ENCODE measurements at regions of chr13 and their contacts with region 1.

Region 1: GRCh38 chr13:31538067-31539042 is 201.0 kb upstream of the RXFP2 start:
- DNase-seq: peak; percentile 72
- H3K4me3 Mint-ChIP-seq: no peak overlapping the region
- H3K27ac Mint-ChIP-seq: no peak overlapping the region
- H3K4me1 Mint-ChIP-seq: no peaks in the 10 kb centered on the region
- H3K27me3 Mint-ChIP-seq: peaks cover 40% of the 10 kb centered on the region
- CTCF ChIP-seq: peak; percentile 51

Region 2: DNA sequence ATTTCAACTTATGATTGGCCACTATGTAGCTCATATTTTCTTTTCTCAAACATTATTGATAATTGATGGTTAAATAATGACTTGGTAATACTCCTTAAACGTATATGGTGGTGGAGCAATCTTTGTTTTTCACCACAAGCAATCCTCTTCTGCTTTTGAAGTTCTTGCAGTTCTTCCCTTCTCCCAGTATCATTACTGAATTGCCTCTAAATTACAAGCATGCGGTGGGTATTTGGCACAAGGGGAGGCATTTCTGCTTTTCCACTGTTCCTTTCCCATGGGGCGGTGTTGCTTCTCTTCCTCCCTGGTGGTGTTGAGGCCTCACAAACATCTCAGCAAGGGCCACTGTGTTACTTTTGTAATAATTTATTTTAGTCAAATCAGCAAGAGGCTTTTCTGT is 33.4 kb before region 1 on chr13:
- CTCF ChIA-PET with region 1: interaction called, 10 read pairs
- POLR2A ChIA-PET with region 1: no interaction called
- intact Hi-C with region 1: no loop called
- DNase-seq: no peak
- H3K4me3 Mint-ChIP-seq: no peak overlapping the region
- H3K27ac Mint-ChIP-seq: no peak overlapping the region
- H3K4me1 Mint-ChIP-seq: no peaks in the 10 kb centered on the region
- H3K27me3 Mint-ChIP-seq: peaks cover 33% of the 10 kb centered on the region
- CTCF ChIP-seq: no peak

Region 3: GRCh38 chr13:31518645-31519044 is 19.7 kb before region 1 on chr13:
- CTCF ChIA-PET with region 1: interaction called, 24 read pairs
- POLR2A ChIA-PET with region 1: interaction called, 3 read pairs
- intact Hi-C with region 1: no loop called
- DNase-seq: no peak
- H3K4me3 Mint-ChIP-seq: no peak overlapping the region
- H3K27ac Mint-ChIP-seq: no peak overlapping the region
- H3K4me1 Mint-ChIP-seq: no peaks in the 10 kb centered on the region
- H3K27me3 Mint-ChIP-seq: peaks cover 63% of the 10 kb centered on the region
- CTCF ChIP-seq: no peak

Region 4: DNA sequence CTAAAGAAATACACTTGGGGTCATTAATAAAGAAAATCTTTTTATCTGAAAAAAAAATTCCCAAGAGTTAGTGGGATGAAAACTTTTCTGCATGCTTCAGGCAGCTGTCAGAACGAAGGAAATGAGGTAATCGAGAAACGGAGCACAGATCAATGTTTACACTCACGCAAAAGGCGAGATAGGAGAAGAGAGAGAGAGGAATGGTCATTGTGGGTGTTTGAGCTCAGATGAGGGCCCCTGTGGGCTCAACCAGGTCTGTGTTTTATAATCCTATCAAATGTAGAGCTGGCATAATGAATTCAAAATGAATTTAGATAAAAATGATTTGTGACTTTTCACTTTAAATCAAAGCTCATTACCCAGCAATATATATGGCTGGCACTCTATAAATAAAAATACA is 194.7 kb after region 1 on chr13:
- CTCF ChIA-PET with region 1: interaction called, 12 read pairs
- POLR2A ChIA-PET with region 1: no interaction called
- intact Hi-C with region 1: no loop called
- DNase-seq: no peak
- H3K4me3 Mint-ChIP-seq: no peak overlapping the region
- H3K27ac Mint-ChIP-seq: no peak overlapping the region
- H3K4me1 Mint-ChIP-seq: no peaks in the 10 kb centered on the region
- H3K27me3 Mint-ChIP-seq: peaks cover 54% of the 10 kb centered on the region
- CTCF ChIP-seq: no peak

Region 5: GRCh38 chr13:31742097-31742734 is 203.9 kb after region 1 on chr13:
- CTCF ChIA-PET with region 1: interaction called, 72 read pairs
- POLR2A ChIA-PET with region 1: interaction called, 3 read pairs
- intact Hi-C with region 1: loop called (anchors 1 kb)
- DNase-seq: peak; percentile 73
- H3K4me3 Mint-ChIP-seq: no peak overlapping the region
- H3K27ac Mint-ChIP-seq: no peak overlapping the region
- H3K4me1 Mint-ChIP-seq: peaks cover 5% of the 10 kb centered on the region
- H3K27me3 Mint-ChIP-seq: peaks cover 16% of the 10 kb centered on the region
- CTCF ChIP-seq: peak; percentile 90

Region 6: DNA sequence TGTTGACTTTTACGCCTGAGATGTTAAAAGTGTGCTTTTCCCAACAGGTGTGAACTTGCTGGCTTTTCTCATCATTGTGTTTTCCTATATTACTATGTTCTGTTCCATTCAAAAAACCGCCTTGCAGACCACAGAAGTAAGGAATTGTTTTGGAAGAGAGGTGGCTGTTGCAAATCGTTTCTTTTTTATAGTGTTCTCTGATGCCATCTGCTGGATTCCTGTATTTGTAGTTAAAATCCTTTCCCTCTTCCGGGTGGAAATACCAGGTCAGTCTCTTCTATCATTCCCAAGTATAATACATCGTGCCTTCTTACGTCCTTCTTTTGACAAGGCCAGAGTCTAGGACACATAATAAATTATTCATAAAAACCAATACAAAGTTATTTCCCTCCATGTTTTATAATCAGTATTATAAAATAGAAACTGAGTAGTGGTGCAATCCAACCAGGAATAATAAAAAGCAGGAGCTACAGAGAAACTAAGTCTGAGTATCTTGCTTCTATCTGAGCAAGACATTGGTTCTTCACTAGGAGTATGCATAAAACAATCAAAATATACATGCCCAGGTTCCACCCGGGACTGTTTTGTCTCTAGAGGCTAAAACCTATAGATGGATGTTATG is 258.9 kb after region 1 on chr13:
- CTCF ChIA-PET with region 1: interaction called, 25 read pairs
- POLR2A ChIA-PET with region 1: no interaction called
- intact Hi-C with region 1: loop called (anchors 1 kb)
- DNase-seq: peak; percentile 54
- H3K4me3 Mint-ChIP-seq: no peak overlapping the region
- H3K27ac Mint-ChIP-seq: no peak overlapping the region
- H3K4me1 Mint-ChIP-seq: peaks cover 13% of the 10 kb centered on the region
- H3K27me3 Mint-ChIP-seq: peaks cover 12% of the 10 kb centered on the region
- CTCF ChIP-seq: peak; percentile 39